Activated CD4-positive, alpha-beta T cell treated with anti-CD3 and anti-CD28 coated beads for 36 hours (primary cell): ENCODE measurements at regions of chr3 and their contacts with region 1.

Region 1: GRCh38 chr3:10248184-10249080 is at the start of gene TATDN2:
- DNase-seq: peak; percentile 97
- ATAC-seq: peak; percentile 94
- H3K4me3 Mint-ChIP-seq: peak within 1 kb of the TSS; percentile 97
- H3K27ac Mint-ChIP-seq: peak within 1 kb of the TSS; percentile 96
- H3K4me1 Mint-ChIP-seq: peaks cover 63% of the 10 kb centered on the region
- H3K27me3 Mint-ChIP-seq: no peaks in the 10 kb centered on the region
- total RNA-seq, gene TATDN2: 40.0 to 40.2 TPM

Region 2: DNA sequence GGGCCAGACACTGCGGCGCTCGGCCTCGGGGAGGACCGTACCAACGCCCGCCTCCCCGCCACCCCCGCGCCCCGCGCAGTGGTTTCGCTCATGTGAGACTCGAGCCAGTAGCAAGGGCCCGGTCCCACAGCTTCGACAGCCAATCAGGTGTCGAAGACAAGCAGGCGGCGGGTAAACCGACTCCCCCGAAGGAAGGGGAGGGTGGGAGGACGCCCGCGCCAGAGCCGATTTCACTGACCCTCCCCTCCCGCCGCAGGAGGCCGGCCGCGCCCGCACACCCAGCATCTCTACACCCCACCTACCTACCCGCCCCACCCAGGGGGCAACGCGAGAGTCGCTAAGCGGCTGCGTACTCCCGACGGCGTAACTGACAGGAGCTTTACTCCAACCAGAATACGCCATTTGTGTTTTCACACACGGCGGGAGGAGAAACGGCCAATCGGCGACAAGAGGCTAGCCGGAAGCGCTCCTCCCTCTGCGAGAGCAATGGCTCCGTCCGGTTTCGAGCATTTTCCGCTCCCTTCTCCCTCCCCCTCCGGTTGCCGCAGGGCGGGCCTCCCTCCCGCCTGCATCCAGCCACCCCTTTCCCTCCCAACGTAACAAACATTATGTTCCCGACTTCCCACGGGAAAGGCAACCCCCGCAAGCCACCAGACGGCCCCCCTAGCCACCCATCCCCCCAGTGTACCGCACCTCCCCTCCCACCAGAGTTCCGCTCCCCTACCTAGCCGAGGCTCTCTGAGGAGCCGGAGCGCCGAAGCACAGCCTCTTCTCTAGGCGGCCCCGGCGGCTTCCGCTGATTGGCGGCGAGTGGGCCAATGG is 851.5 kb before region 1 on chr3:
- CTCF ChIA-PET with region 1: no interaction called
- POLR2A ChIA-PET with region 1: no interaction called
- intact Hi-C with region 1: loop called in 1 of 2 experiments (anchors 2 kb)
- DNase-seq: peak; percentile 99
- ATAC-seq: peak; percentile 74
- H3K4me3 Mint-ChIP-seq: peak overlapping the region; percentile 93
- H3K27ac Mint-ChIP-seq: peak overlapping the region; percentile 98
- H3K4me1 Mint-ChIP-seq: peaks cover 63% of the 10 kb centered on the region
- H3K27me3 Mint-ChIP-seq: no peaks in the 10 kb centered on the region

Region 3: GRCh38 chr3:9890249-9891071 is 358.0 kb before region 1 on chr3 and contains the start of gene JAGN1:
- CTCF ChIA-PET with region 1: no interaction called
- POLR2A ChIA-PET with region 1: no interaction called
- intact Hi-C with region 1: loop called in 1 of 2 experiments (anchors 1 kb)
- DNase-seq: peak; percentile 96
- ATAC-seq: peak; percentile 82
- H3K4me3 Mint-ChIP-seq: peak within 1 kb of the TSS; percentile 96
- H3K27ac Mint-ChIP-seq: peak within 1 kb of the TSS; percentile 98
- H3K4me1 Mint-ChIP-seq: peaks cover 34% of the 10 kb centered on the region
- H3K27me3 Mint-ChIP-seq: no peaks in the 10 kb centered on the region
- total RNA-seq, gene JAGN1: 27.1 to 33.0 TPM

Region 4: GRCh38 chr3:10026084-10026890 is 222.1 kb before region 1 on chr3 and contains the start of gene FANCD2:
- CTCF ChIA-PET with region 1: no interaction called
- POLR2A ChIA-PET with region 1: no interaction called
- intact Hi-C with region 1: loop called in 1 of 2 experiments (anchors 1 kb)
- DNase-seq: peak; percentile 95
- ATAC-seq: peak; percentile 91
- H3K4me3 Mint-ChIP-seq: peak within 1 kb of the TSS; percentile 95
- H3K27ac Mint-ChIP-seq: peak within 1 kb of the TSS; percentile 99
- H3K4me1 Mint-ChIP-seq: peaks cover 25% of the 10 kb centered on the region
- H3K27me3 Mint-ChIP-seq: no peaks in the 10 kb centered on the region
- total RNA-seq, gene FANCD2: 86.4 to 87.7 TPM

Region 5: GRCh38 chr3:10164546-10165393 is 83.7 kb before region 1 on chr3 and contains the start of gene IRAK2:
- CTCF ChIA-PET with region 1: no interaction called
- POLR2A ChIA-PET with region 1: no interaction called
- intact Hi-C with region 1: loop called in 1 of 2 experiments (anchors 2 kb)
- DNase-seq: peak; percentile 83
- ATAC-seq: peak; percentile 79
- H3K4me3 Mint-ChIP-seq: peak within 1 kb of the TSS; percentile 70
- H3K27ac Mint-ChIP-seq: peak within 1 kb of the TSS; percentile 13
- H3K4me1 Mint-ChIP-seq: peaks cover 21% of the 10 kb centered on the region
- H3K27me3 Mint-ChIP-seq: no peaks in the 10 kb centered on the region
- total RNA-seq, gene IRAK2: 3.9 to 4.0 TPM

Region 6: GRCh38 chr3:10224784-10225665 is 23.4 kb before region 1 on chr3:
- CTCF ChIA-PET with region 1: interaction called, 4 read pairs
- POLR2A ChIA-PET with region 1: interaction called, 3 read pairs
- intact Hi-C with region 1: loop called in 1 of 2 experiments (anchors 1 kb)
- DNase-seq: peak; percentile 83
- ATAC-seq: peak; percentile 72
- H3K4me3 Mint-ChIP-seq: no peak overlapping the region
- H3K27ac Mint-ChIP-seq: peak overlapping the region; percentile 83
- H3K4me1 Mint-ChIP-seq: peaks cover 69% of the 10 kb centered on the region
- H3K27me3 Mint-ChIP-seq: no peaks in the 10 kb centered on the region

Region 7: GRCh38 chr3:10322352-10322710 is 73.9 kb after region 1 on chr3:
- CTCF ChIA-PET with region 1: no interaction called
- POLR2A ChIA-PET with region 1: no interaction called
- intact Hi-C with region 1: loop called in 1 of 2 experiments (anchors 1 kb)
- DNase-seq: peak; percentile 37
- ATAC-seq: peak; percentile 22
- H3K4me3 Mint-ChIP-seq: no peak overlapping the region
- H3K27ac Mint-ChIP-seq: peak overlapping the region; percentile 3
- H3K4me1 Mint-ChIP-seq: peaks cover 23% of the 10 kb centered on the region
- H3K27me3 Mint-ChIP-seq: peaks cover 4% of the 10 kb centered on the region